Natural killer cell (primary cell): ENCODE measurements at regions of chr6 and their contacts with region 1.

Region 1: GRCh38 chr6:132300323-132300949 is 100.8 kb downstream of the MOXD1 start:
- DNase-seq: peak in 1 of 2 donors; percentile 45
- ATAC-seq: peak in 2 of 3 donors; percentile 61 to 64
- H3K4me3 ChIP-seq: no peak overlapping the region
- H3K4me3 Mint-ChIP-seq: no peak overlapping the region
- H3K27ac ChIP-seq: no peak overlapping the region
- H3K27ac Mint-ChIP-seq: no peak overlapping the region
- H3K4me1 ChIP-seq: no peaks in the 10 kb centered on the region
- H3K4me1 Mint-ChIP-seq: no peaks in the 10 kb centered on the region
- H3K27me3 ChIP-seq: no peaks in the 10 kb centered on the region
- H3K27me3 Mint-ChIP-seq: peaks cover 6 to 19% of the 10 kb centered on the region in 2 donors
- CTCF ChIP-seq: peak; percentile 20

Region 2: GRCh38 chr6:132256457-132256856 is 44.0 kb before region 1 on chr6:
- intact Hi-C with region 1: loop called (anchors 1 kb)
- DNase-seq: no peak
- ATAC-seq: no peak
- H3K4me3 ChIP-seq: no peak overlapping the region
- H3K4me3 Mint-ChIP-seq: no peak overlapping the region
- H3K27ac ChIP-seq: no peak overlapping the region
- H3K27ac Mint-ChIP-seq: no peak overlapping the region
- H3K4me1 ChIP-seq: no peaks in the 10 kb centered on the region
- H3K4me1 Mint-ChIP-seq: no peaks in the 10 kb centered on the region
- H3K27me3 ChIP-seq: no peaks in the 10 kb centered on the region
- H3K27me3 Mint-ChIP-seq: peaks cover 16 to 41% of the 10 kb centered on the region in 2 donors
- CTCF ChIP-seq: no peak

Region 3: GRCh38 chr6:132279592-132280139 is 20.8 kb before region 1 on chr6:
- intact Hi-C with region 1: loop called (anchors 2 kb)
- DNase-seq: peak; percentile 65 to 84
- ATAC-seq: peak; percentile 85 to 95 (median 94)
- H3K4me3 ChIP-seq: peak overlapping the region; percentile 19
- H3K4me3 Mint-ChIP-seq: peak overlapping the region; percentile 90
- H3K27ac ChIP-seq: no peak overlapping the region
- H3K27ac Mint-ChIP-seq: peak overlapping the region in 1 of 2 donors; percentile 47
- H3K4me1 ChIP-seq: no peaks in the 10 kb centered on the region
- H3K4me1 Mint-ChIP-seq: peaks cover 0 to 5% of the 10 kb centered on the region in 2 donors
- H3K27me3 ChIP-seq: peaks cover 3% of the 10 kb centered on the region
- H3K27me3 Mint-ChIP-seq: peaks cover 27 to 34% of the 10 kb centered on the region in 2 donors
- CTCF ChIP-seq: peak; percentile 99

Region 4: DNA sequence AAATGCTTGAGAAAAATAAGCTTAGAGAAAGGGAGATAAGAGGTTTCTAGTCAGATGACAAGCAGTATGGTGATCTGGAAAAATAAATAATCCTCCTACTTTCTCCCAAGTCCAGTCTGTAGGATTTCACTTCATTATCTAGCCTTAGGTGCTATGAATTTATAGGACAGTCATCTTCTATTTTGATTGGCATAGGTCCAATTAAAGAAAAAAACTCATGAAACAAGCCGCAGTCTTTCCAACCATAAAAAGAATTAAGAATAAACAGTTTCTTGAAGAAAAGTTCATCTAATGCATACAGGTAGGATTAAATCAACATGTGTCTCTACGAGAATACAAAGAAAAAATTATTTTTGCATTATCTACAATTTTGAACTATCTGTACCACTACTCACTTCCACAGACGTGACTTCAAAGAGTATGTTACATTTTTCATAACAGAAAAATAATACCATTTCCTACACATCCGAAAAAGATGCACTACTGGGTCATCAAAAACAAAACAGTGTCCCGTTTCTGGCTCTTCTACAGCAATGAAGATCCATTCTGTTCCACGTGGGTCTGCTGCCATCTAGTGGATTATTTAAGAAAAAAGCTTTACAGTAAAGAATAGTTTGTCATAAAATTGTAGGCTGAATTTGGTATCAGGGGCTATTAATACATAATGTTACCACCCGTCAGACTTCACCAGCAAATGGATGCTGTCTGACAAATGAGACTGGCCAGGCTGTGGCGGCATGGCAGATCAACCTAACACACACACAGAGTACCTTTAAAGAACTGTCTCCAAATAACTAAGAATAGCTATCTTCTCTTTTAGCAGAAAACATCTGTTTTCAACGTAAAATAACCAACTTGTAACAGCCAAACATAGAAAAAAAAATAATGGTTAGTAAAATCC is 183.6 kb after region 1 on chr6:
- intact Hi-C with region 1: loop called (anchors 1 kb)
- DNase-seq: peak in 1 of 2 donors; percentile 81
- ATAC-seq: peak; percentile 78 to 89 (median 85)
- H3K4me3 ChIP-seq: no peak overlapping the region
- H3K4me3 Mint-ChIP-seq: no peak overlapping the region
- H3K27ac ChIP-seq: no peak overlapping the region
- H3K27ac Mint-ChIP-seq: no peak overlapping the region
- H3K4me1 ChIP-seq: no peaks in the 10 kb centered on the region
- H3K4me1 Mint-ChIP-seq: peaks cover 14 to 35% of the 10 kb centered on the region in 2 donors
- H3K27me3 ChIP-seq: no peaks in the 10 kb centered on the region
- H3K27me3 Mint-ChIP-seq: no peaks in the 10 kb centered on the region
- CTCF ChIP-seq: peak; percentile 86